Esophagus muscularis mucosa (tissue), 4 donors: ENCODE measurements at regions of chr9 and their contacts with region 1.

Region 1: GRCh38 chr9:131366761-131367401 is 27.0 kb upstream of the PRRC2B start:
- DNase-seq: no peak
- H3K4me3 ChIP-seq: no peak overlapping the region
- H3K27ac ChIP-seq: no peak overlapping the region
- H3K4me1 ChIP-seq: peaks cover 0 to 11% (median 2%) of the 10 kb centered on the region in 4 donors
- H3K27me3 ChIP-seq: no peaks in the 10 kb centered on the region
- CTCF ChIP-seq: peak; percentile 25 to 37 (median 35)
- EP300 ChIP-seq: no peak
- POLR2A ChIP-seq: no peak

Region 2: DNA sequence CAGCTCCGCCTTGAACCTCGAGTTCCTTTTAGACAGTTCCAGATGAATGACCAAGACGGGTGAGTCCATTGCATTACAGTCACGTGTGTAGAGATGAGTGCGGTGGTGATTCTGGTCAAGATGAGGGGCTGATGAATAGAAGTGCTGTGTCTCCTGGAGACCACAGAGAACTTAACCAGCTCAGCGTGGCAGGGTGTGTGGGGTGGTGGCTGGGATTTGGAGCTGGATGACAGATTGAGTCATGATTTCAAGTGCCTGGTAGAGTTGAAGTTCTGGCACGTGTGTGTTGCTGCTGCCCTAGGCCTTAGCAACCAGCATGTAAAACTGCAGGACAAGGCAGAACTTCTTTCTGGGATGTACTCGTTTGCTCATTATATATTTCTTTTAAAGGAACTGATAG is 80.3 kb after region 1 on chr9:
- intact Hi-C with region 1: no loop called
- DNase-seq: no peak
- H3K4me3 ChIP-seq: no peak overlapping the region
- H3K27ac ChIP-seq: no peak overlapping the region
- H3K4me1 ChIP-seq: peaks cover 0 to 5% (median 0%) of the 10 kb centered on the region in 4 donors
- H3K27me3 ChIP-seq: no peaks in the 10 kb centered on the region
- CTCF ChIP-seq: no peak
- EP300 ChIP-seq: no peak
- POLR2A ChIP-seq: no peak

Region 3: DNA sequence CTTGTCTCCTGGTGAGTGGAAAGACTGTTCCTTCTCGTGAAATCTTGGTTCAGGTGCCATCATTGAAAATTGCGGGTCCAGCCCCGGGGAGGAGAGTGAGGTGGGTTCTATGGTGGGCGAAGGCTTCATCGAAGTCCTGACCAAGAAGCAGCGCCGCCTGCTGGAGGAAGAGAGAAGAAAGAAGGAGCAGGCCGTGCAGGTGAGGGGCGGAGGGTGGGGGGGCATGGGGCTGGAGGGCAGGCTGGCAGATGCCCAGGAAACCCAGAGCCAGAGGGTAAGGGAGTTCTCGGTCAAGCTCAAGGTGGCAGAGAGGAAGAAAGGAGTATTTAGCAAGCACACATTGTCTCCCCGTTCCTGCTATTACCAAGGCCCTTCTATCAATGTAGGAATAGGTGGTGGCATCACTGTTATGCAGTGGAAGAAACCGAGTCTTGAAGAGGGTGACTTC is 111.6 kb after region 1 on chr9:
- intact Hi-C with region 1: loop called (anchors 5 kb)
- DNase-seq: no peak
- H3K4me3 ChIP-seq: no peak overlapping the region
- H3K27ac ChIP-seq: peak overlapping the region in 1 of 4 donors; percentile 30
- H3K4me1 ChIP-seq: peaks cover 29 to 37% (median 36%) of the 10 kb centered on the region in 4 donors
- H3K27me3 ChIP-seq: no peaks in the 10 kb centered on the region
- CTCF ChIP-seq: peak; percentile 18 to 69 (median 57)
- EP300 ChIP-seq: no peak
- POLR2A ChIP-seq: no peak